ENCODE measurements at regions of chr13 and their contacts with region 1.

Region 1: GRCh38 chr13:77425705-77426104 is 98.8 kb upstream of the MYCBP2 start:
- DNase-seq: no peak
- H3K4me3 ChIP-seq: no peak overlapping the region
- H3K27ac ChIP-seq: no peak overlapping the region
- H3K4me1 ChIP-seq: no peaks in the 10 kb centered on the region
- H3K27me3 ChIP-seq: peaks cover 0 to under 1% of the 10 kb centered on the region in 2 experiments
- CTCF ChIP-seq: no peak
- POLR2A ChIP-seq: no peak

Region 2: DNA sequence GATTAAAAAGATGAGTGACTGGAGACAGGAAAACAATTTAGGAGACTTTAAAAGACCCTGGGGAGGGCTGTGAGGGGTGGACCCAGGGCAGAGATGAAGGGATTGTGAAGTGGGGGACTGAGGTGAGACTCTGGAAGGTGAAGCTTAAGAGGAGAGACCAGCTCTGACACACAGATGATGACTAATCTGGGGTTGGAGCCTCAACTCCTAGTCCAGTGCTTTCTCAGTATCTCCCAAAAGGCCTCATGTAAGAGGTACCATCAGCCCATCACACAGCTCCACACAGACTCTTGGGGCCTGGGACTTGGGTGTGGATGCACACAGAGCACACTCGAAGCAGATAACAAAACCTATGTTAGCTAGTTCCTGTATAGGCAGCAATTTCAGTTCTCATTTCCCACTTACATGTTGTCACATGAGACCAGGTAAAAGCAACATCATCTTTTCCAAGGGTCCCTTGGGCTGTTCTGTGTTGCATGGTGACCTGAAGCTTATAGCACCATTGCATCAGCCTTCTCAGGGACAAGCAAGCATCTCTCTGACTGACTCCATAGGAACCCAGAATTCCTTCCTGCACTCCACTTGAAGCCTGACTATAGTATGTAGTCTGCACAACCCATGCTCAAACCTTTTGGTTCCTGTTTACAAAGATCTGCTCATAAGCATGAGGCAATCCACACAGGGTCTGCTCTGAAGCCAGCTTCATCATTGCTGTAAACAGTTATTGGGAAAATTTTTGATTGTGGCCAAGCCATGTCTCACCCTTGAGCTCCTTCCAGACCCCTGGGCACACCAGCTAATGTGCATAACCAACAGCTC is 10.2 kb before region 1 on chr13:
- CTCF ChIA-PET with region 1: interaction called, 18 read pairs
- POLR2A ChIA-PET with region 1: no interaction called
- dilution Hi-C with region 1: no loop called
- intact Hi-C with region 1: no loop called
- DNase-seq: no peak
- H3K4me3 ChIP-seq: no peak overlapping the region
- H3K27ac ChIP-seq: no peak overlapping the region
- H3K4me1 ChIP-seq: no peaks in the 10 kb centered on the region
- H3K27me3 ChIP-seq: no peaks in the 10 kb centered on the region
- CTCF ChIP-seq: no peak
- POLR2A ChIP-seq: no peak